Natural killer cell (primary cell): ENCODE measurements at regions of chrX and their contacts with region 1.

Region 1: GRCh38 chrX:130106071-130106470 is 4.2 kb downstream of the ELF4 start:
- DNase-seq: no peak
- ATAC-seq: no peak
- H3K4me3 ChIP-seq: no peak overlapping the region
- H3K4me3 Mint-ChIP-seq: peak overlapping the region; percentile 71
- H3K27ac ChIP-seq: no peak overlapping the region
- H3K27ac Mint-ChIP-seq: peak overlapping the region; percentile 83 to 91
- H3K4me1 ChIP-seq: peaks cover 61% of the 10 kb centered on the region
- H3K4me1 Mint-ChIP-seq: peaks cover 48 to 65% of the 10 kb centered on the region in 2 donors
- H3K27me3 ChIP-seq: no peaks in the 10 kb centered on the region
- H3K27me3 Mint-ChIP-seq: peaks cover 0 to 2% of the 10 kb centered on the region in 2 donors
- CTCF ChIP-seq: no peak

Region 2: GRCh38 chrX:130086447-130087206 is 19.4 kb before region 1 on chrX:
- intact Hi-C with region 1: loop called (anchors 2 kb)
- DNase-seq: peak; percentile 56 to 82
- ATAC-seq: peak; percentile 46 to 71 (median 67)
- H3K4me3 ChIP-seq: peak overlapping the region; percentile 46
- H3K4me3 Mint-ChIP-seq: peak overlapping the region; percentile 88
- H3K27ac ChIP-seq: peak overlapping the region; percentile 89
- H3K27ac Mint-ChIP-seq: peak overlapping the region; percentile 84 to 88
- H3K4me1 ChIP-seq: peaks cover 98% of the 10 kb centered on the region
- H3K4me1 Mint-ChIP-seq: peaks cover 60 to 71% of the 10 kb centered on the region in 2 donors
- H3K27me3 ChIP-seq: no peaks in the 10 kb centered on the region
- H3K27me3 Mint-ChIP-seq: no peaks in the 10 kb centered on the region
- CTCF ChIP-seq: no peak